ENCODE measurements at regions of chr2 and their contacts with region 1.

Region 1: DNA sequence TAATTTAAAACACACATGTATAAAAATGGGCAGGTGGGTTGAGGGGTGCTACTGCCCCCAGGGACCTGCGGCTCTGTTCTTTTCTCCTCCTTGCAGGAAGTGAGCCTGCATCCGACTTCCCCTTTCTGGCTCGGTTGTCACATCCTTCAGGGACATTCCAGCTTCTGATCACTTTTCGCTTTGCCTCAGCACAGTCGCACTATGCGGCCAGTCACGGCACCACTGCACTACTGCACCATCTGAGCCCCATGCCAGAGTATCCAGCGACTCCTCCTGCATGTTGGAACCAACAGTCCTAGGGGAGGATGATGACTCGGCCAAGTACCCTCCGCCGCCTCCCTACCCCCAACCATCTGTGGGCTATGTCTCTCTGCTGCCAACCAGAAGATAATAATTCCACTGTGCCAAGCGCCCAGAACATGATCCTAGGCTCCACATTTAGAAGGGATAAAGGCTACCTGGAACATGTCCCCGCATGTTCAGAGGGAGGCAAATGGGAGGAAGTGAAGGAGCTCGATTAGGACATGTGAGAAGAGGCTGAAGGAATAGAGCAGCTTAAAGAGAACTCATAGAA is 17.6 kb downstream of the CDC42EP3 start:
- DNase-seq: peak; percentile 85
- ATAC-seq: peak; percentile 56
- H3K4me3 ChIP-seq: peak overlapping the region in 3 of 5 experiments; percentile 15 to 41 (median 35)
- H3K4me3 Mint-ChIP-seq: peak overlapping the region; percentile 67
- H3K27ac ChIP-seq: peak overlapping the region; percentile 81 to 87
- H3K27ac Mint-ChIP-seq: peak overlapping the region; percentile 84
- H3K4me1 ChIP-seq: peaks cover 85 to 86% of the 10 kb centered on the region in 2 donors
- H3K4me1 Mint-ChIP-seq: peaks cover 91% of the 10 kb centered on the region
- H3K27me3 ChIP-seq: no peaks in the 10 kb centered on the region
- H3K27me3 Mint-ChIP-seq: no peaks in the 10 kb centered on the region
- CTCF ChIP-seq: no peak

Region 2: DNA sequence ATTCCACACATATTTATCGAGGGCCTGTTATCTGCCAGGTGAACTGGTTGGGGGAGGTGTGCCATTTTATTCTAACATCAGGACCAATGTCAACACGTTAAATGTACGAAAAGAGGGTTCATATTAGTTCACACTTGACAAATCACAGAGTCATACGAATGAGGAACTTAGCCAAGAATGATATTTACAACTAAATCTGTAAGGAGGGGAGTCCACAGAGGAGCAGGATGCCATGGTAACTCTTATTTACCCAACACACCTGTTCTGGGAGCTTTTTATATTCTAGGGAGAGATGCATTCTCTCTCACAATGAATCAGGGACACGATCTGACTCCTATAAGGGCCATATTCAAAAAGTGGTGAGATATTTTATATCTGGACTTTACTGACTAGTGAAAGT is 126.5 kb before region 1 on chr2:
- CTCF ChIA-PET with region 1: interaction called, 4 read pairs
- POLR2A ChIA-PET with region 1: interaction called, 11 read pairs
- intact Hi-C with region 1: no loop called
- DNase-seq: peak; percentile 66
- ATAC-seq: peak; percentile 76
- H3K4me3 ChIP-seq: no peak overlapping the region
- H3K4me3 Mint-ChIP-seq: peak overlapping the region; percentile 1
- H3K27ac ChIP-seq: peak overlapping the region in 1 of 2 donors; percentile 39
- H3K27ac Mint-ChIP-seq: peak overlapping the region; percentile 39
- H3K4me1 ChIP-seq: peaks cover 11% of the 10 kb centered on the region in 2 donors
- H3K4me1 Mint-ChIP-seq: peaks cover 12% of the 10 kb centered on the region
- H3K27me3 ChIP-seq: no peaks in the 10 kb centered on the region
- H3K27me3 Mint-ChIP-seq: no peaks in the 10 kb centered on the region
- CTCF ChIP-seq: no peak

Region 3: GRCh38 chr2:37615804-37616676 is 37.9 kb before region 1 on chr2:
- CTCF ChIA-PET with region 1: interaction called, 4 read pairs
- POLR2A ChIA-PET with region 1: interaction called, 14 read pairs
- intact Hi-C with region 1: no loop called
- DNase-seq: peak; percentile 81
- ATAC-seq: peak; percentile 87
- H3K4me3 ChIP-seq: no peak overlapping the region
- H3K4me3 Mint-ChIP-seq: peak overlapping the region; percentile 46
- H3K27ac ChIP-seq: peak overlapping the region; percentile 77 to 79
- H3K27ac Mint-ChIP-seq: peak overlapping the region; percentile 94
- H3K4me1 ChIP-seq: peaks cover 28 to 30% of the 10 kb centered on the region in 2 donors
- H3K4me1 Mint-ChIP-seq: peaks cover 37% of the 10 kb centered on the region
- H3K27me3 ChIP-seq: no peaks in the 10 kb centered on the region
- H3K27me3 Mint-ChIP-seq: no peaks in the 10 kb centered on the region
- CTCF ChIP-seq: no peak

Region 4: GRCh38 chr2:37665604-37666362 is 11.9 kb after region 1 on chr2:
- CTCF ChIA-PET with region 1: interaction called, 10 read pairs
- POLR2A ChIA-PET with region 1: interaction called, 7 read pairs
- intact Hi-C with region 1: loop called (anchors 1 kb)
- DNase-seq: no peak
- ATAC-seq: no peak
- H3K4me3 ChIP-seq: no peak overlapping the region
- H3K4me3 Mint-ChIP-seq: peak overlapping the region; percentile 49
- H3K27ac ChIP-seq: peak overlapping the region in 1 of 2 donors; percentile 50
- H3K27ac Mint-ChIP-seq: peak overlapping the region; percentile 23
- H3K4me1 ChIP-seq: peaks cover 43 to 49% of the 10 kb centered on the region in 2 donors
- H3K4me1 Mint-ChIP-seq: peaks cover 80% of the 10 kb centered on the region
- H3K27me3 ChIP-seq: no peaks in the 10 kb centered on the region
- H3K27me3 Mint-ChIP-seq: no peaks in the 10 kb centered on the region
- CTCF ChIP-seq: no peak

Region 5: DNA sequence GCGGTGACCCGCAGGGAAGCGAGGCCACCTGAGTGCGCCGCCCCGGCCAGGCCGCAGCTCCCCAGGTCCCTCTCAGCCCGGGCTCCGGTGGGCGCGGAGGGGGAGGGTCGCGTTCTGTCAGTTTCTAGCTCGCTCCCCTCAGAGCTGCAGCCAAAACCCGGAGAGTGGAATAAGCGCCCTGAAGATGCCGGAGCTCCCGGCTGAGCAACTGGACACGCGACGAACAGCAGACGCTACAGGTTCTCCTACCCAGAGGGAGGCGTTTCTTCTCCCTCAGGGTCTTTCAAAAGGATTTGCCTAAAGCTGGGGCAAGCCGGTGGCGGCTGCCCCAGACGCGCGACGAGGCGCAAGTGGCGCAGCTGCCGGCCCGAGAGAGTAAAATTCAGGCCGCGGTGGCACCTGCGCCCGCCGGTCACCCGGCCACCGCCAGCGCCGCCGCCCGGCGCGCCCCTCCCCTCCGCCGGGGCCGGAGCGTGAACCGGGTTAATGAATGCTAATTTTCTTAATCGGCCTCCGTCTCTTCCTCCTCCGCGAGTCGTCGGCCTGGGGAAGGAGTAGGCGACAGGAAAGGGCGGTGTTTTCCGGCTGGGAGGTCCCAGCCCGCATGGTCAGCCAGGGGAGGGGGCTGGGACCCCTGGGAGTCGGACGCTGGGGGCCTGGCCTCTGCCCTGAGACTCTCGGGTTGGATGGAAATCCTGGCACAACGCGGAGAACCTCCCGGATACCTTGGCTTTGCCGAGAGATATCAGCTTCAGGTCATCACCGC is 18.4 kb after region 1 on chr2:
- CTCF ChIA-PET with region 1: interaction called, 10 read pairs
- POLR2A ChIA-PET with region 1: interaction called, 7 read pairs
- intact Hi-C with region 1: loop called (anchors 1 kb)
- DNase-seq: peak; percentile 86
- ATAC-seq: peak; percentile 48
- H3K4me3 ChIP-seq: peak overlapping the region; percentile 44 to 92 (median 84)
- H3K4me3 Mint-ChIP-seq: peak overlapping the region; percentile 98
- H3K27ac ChIP-seq: peak overlapping the region; percentile 81 to 83
- H3K27ac Mint-ChIP-seq: peak overlapping the region; percentile 95
- H3K4me1 ChIP-seq: peaks cover 31 to 38% of the 10 kb centered on the region in 2 donors
- H3K4me1 Mint-ChIP-seq: peaks cover 52% of the 10 kb centered on the region
- H3K27me3 ChIP-seq: no peaks in the 10 kb centered on the region
- H3K27me3 Mint-ChIP-seq: no peaks in the 10 kb centered on the region
- CTCF ChIP-seq: no peak

Region 6: DNA sequence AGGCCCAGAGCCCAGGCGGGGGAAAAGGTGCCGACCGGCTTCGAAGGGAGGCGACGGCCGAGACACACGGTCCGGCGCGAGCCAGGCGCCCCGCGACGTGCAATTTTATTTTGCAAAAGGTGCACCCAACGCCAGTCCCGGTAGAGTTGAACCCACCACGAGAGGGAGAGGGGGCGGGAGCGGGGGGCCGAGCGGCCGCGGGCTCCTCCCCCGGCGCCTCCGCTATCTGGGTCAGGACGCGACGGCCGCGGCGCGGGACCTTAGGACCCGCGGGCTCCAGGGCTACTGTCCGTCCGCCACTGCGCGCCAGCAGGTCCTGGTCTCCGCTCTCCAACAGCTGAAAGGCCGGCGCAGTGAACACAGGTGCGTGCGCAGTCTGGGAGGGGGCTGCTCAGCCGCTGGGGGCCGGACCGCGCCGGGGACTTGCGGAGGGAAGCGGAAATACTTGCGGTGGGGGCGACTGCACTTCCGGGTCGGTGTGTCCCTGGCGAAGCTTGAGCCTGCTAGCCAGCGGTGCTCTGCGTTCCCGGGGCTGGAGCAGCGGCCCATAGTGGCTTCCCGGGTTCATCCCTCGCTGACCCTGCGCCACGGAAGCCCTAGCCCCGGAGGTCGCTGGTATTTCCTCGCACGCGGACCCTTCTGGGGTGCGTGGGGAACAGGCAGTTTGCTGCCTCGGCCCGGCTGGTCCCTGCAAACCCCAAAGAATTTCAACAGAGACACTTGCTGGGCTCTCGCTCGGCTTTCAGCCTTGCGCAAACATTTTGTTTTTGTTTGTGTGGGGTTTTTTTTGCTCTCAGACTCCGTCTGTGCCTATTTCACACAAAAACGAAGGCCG is 271.4 kb after region 1 on chr2 and contains the start of gene RMDN2:
- CTCF ChIA-PET with region 1: no interaction called
- POLR2A ChIA-PET with region 1: no interaction called
- intact Hi-C with region 1: loop called (anchors 5 kb)
- DNase-seq: peak; percentile 92
- ATAC-seq: peak; percentile 85
- H3K4me3 ChIP-seq: peak within 1 kb of the TSS; percentile 61 to 86 (median 81)
- H3K4me3 Mint-ChIP-seq: peak within 1 kb of the TSS; percentile 96
- H3K27ac ChIP-seq: peak within 1 kb of the TSS; percentile 84
- H3K27ac Mint-ChIP-seq: peak within 1 kb of the TSS; percentile 96
- H3K4me1 ChIP-seq: peaks cover 13 to 15% of the 10 kb centered on the region in 2 donors
- H3K4me1 Mint-ChIP-seq: peaks cover 34% of the 10 kb centered on the region
- H3K27me3 ChIP-seq: no peaks in the 10 kb centered on the region
- H3K27me3 Mint-ChIP-seq: peaks cover 7% of the 10 kb centered on the region
- CTCF ChIP-seq: peak; percentile 40
- total RNA-seq, gene RMDN2: 6.4 and 6.6 TPM in 2 replicates

Measured in B cell (primary cell).